ENCODE measurements at regions of chr13 and their contacts with region 1.

Region 1: GRCh38 chr13:75482070-75482819 is at the start of gene TBC1D4:
- DNase-seq: peak; percentile 25 to 38 (median 29)
- H3K4me3 ChIP-seq: peak within 1 kb of the TSS; percentile 29 to 53
- H3K4me3 Mint-ChIP-seq: peak within 1 kb of the TSS; percentile 92 to 98 (median 94)
- H3K27ac ChIP-seq: no peak within 1 kb of the TSS
- H3K27ac Mint-ChIP-seq: peak within 1 kb of the TSS in 3 of 7 donors; percentile 15 to 64 (median 41)
- H3K4me1 ChIP-seq: peaks cover 12% of the 10 kb centered on the region
- H3K4me1 Mint-ChIP-seq: peaks cover 8 to 19% (median 12%) of the 10 kb centered on the region in 4 donors
- H3K27me3 ChIP-seq: no peaks in the 10 kb centered on the region
- H3K27me3 Mint-ChIP-seq: peaks cover 41 to 52% of the 10 kb centered on the region in 2 donors
- total RNA-seq, gene TBC1D4: 63.5 to 67.2 TPM

Region 2: GRCh38 chr13:75635828-75636435 is 153.7 kb after region 1 on chr13 and contains the start of gene LMO7:
- CTCF ChIA-PET with region 1: no interaction called
- POLR2A ChIA-PET with region 1: no interaction called
- intact Hi-C with region 1: loop called (anchors 5 kb)
- DNase-seq: peak; percentile 51 to 65 (median 55)
- H3K4me3 ChIP-seq: peak within 1 kb of the TSS; percentile 59 to 70
- H3K4me3 Mint-ChIP-seq: peak within 1 kb of the TSS; percentile 82 to 90 (median 86)
- H3K27ac ChIP-seq: peak within 1 kb of the TSS; percentile 31
- H3K27ac Mint-ChIP-seq: peak within 1 kb of the TSS; percentile 47 to 88 (median 74)
- H3K4me1 ChIP-seq: peaks cover 6% of the 10 kb centered on the region
- H3K4me1 Mint-ChIP-seq: peaks cover 12 to 19% (median 14%) of the 10 kb centered on the region in 4 donors
- H3K27me3 ChIP-seq: no peaks in the 10 kb centered on the region
- H3K27me3 Mint-ChIP-seq: peaks cover 0 to 4% of the 10 kb centered on the region in 2 donors
- total RNA-seq, gene LMO7: 25.7 to 29.4 TPM

Measured in CD4-positive, alpha-beta memory T cell (primary cell).